A549 (cell line): ENCODE measurements at regions of chr7 and their contacts with region 1.

Region 1: GRCh38 chr7:20598459-20599309 is 16.8 kb upstream of the ABCB5 start:
- DNase-seq: peak; percentile 33 to 71
- ATAC-seq: peak; percentile 75 to 89; a peak in 4 of 6 replicates
- H3K4me3 ChIP-seq: no peak overlapping the region
- H3K27ac ChIP-seq: no peak overlapping the region
- H3K4me1 ChIP-seq: no peaks in the 10 kb centered on the region
- CTCF ChIP-seq: peak; percentile 93
- EP300 ChIP-seq: no peak
- POLR2A ChIP-seq: no peak
- RAD21 ChIP-seq: peak; percentile 91 to 94

Region 2: GRCh38 chr7:19708397-19709248 is 890.1 kb before region 1 on chr7 and contains the start of gene POLR1F:
- CTCF ChIA-PET with region 1: interaction called, 243 read pairs
- POLR2A ChIA-PET with region 1: interaction called, 17 read pairs
- DNase-seq: peak; percentile 68 to 96
- ATAC-seq: peak; percentile 97 to 99
- H3K4me3 ChIP-seq: peak within 1 kb of the TSS; percentile 89
- H3K27ac ChIP-seq: peak within 1 kb of the TSS; percentile 72 to 89
- H3K4me1 ChIP-seq: peaks cover 14% of the 10 kb centered on the region
- CTCF ChIP-seq: peak; percentile 75
- EP300 ChIP-seq: no peak
- POLR2A ChIP-seq: peak; percentile 94
- RAD21 ChIP-seq: peak; percentile 76 to 77
- polyA plus RNA-seq, gene POLR1F: 23.4 and 33.9 TPM in 2 replicates

Region 3: DNA sequence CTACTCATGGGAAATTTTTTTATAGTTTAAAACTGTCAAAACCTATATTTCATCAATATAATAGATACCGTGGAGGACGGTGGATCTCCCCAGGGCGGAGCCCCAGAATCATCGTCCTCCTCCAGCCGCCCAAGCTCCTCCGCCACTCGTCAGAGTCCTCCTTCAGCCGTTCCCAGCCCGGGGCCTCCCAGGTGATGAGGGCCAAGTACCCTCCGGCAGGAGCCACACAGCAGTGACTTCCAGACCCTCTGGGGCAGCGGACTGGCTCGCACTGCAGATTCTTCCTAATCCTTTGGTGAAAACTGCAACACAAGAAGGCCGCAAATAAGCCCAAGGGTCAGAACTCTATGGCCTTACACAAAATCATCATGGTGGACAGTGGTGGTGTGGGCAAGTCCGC is 10.0 kb before region 1 on chr7:
- CTCF ChIA-PET with region 1: interaction called, 18 read pairs
- POLR2A ChIA-PET with region 1: no interaction called
- DNase-seq: no peak
- ATAC-seq: no peak
- H3K4me3 ChIP-seq: no peak overlapping the region
- H3K27ac ChIP-seq: no peak overlapping the region
- H3K4me1 ChIP-seq: no peaks in the 10 kb centered on the region
- CTCF ChIP-seq: no peak
- EP300 ChIP-seq: no peak
- POLR2A ChIP-seq: no peak
- RAD21 ChIP-seq: no peak